Left cardiac atrium (tissue), 4 donors: ENCODE measurements at regions of chr4 and their contacts with region 1.

Region 1: GRCh38 chr4:176150356-176150682 is 45.1 kb downstream of the SPATA4 start:
- DNase-seq: no peak
- ATAC-seq: peak in 1 of 2 donors; percentile 49

Region 2: DNA sequence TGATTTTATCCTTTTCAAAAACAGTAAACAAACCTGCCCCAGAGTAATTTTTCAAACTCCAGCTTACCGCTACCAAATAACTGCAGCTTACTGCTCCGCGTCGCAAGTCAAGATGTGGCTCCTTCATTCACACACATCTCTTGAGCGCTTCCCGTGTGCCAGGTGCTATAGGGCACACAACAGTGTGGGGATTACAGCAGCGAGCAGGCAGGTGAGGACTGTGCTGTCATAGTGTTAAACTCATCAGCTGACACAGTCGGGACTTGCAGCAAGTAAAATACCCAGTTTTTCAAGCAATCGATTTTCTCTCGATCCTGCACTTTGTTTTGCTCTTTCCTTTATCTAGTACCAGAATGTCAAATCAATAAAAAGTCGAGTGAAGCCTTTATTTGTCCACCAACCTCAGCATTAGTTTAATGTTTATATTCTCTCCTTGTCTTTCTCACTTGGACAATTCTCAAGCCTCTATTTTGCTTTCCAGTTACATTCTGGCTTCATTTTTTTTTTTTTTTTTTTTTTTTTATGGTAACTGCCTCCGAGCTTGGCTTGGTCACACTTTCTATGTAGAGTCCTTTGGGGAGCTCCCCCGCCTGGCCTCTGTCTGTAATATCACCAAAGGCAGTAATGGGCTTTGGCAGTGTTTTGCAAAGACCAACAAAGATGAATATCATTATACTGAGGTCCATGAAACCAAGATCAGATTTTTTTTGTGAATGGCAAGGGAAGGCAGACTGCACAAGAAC is 127.0 kb after region 1 on chr4:
- intact Hi-C with region 1: loop called (anchors 5 to 10 kb)
- DNase-seq: peak; percentile 61
- ATAC-seq: peak; percentile 83 to 93

Region 3: DNA sequence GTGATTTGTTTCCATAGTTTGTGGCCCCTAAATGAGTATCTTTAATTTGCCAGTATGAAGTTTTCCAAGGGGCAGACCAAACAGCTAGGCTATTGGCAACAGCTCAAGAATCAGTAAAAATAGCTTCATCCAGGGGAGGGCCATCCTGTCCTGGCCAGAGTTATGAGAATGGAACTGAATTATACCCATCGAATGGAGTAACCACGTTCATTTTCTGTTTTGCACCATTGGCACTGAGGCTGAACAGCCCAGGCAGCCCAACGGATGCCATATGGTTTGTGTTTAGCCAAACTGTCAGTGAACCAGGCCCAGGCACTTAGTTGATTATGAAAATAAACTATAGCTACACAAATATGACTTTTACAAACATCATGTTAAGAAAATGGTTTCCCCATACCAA is 136.4 kb after region 1 on chr4:
- intact Hi-C with region 1: loop called in 1 of 2 experiments (anchors 10 kb)
- DNase-seq: no peak
- ATAC-seq: peak in 1 of 2 donors; percentile 46

Region 4: DNA sequence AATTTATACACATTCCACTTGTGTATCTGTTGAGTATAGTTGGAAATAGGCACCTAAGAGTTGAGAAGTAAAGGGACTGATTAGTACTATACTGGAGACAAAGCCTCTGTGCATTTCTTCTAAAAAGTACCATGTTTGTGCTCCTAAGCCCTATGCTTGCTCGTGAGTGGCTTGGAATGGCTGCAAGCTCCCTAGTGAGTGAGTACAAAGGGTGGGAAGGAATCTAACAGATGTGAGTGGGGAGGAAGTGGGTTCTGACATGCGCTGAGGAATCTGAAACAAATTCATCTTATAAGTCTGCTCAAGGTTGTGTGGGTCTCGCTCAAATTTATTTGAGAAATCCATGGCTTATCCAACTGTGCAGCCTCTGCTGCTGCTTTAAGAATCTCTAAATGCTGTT is 182.8 kb after region 1 on chr4:
- intact Hi-C with region 1: loop called in 1 of 2 experiments (anchors 5 kb)
- DNase-seq: no peak
- ATAC-seq: no peak

Region 5: DNA sequence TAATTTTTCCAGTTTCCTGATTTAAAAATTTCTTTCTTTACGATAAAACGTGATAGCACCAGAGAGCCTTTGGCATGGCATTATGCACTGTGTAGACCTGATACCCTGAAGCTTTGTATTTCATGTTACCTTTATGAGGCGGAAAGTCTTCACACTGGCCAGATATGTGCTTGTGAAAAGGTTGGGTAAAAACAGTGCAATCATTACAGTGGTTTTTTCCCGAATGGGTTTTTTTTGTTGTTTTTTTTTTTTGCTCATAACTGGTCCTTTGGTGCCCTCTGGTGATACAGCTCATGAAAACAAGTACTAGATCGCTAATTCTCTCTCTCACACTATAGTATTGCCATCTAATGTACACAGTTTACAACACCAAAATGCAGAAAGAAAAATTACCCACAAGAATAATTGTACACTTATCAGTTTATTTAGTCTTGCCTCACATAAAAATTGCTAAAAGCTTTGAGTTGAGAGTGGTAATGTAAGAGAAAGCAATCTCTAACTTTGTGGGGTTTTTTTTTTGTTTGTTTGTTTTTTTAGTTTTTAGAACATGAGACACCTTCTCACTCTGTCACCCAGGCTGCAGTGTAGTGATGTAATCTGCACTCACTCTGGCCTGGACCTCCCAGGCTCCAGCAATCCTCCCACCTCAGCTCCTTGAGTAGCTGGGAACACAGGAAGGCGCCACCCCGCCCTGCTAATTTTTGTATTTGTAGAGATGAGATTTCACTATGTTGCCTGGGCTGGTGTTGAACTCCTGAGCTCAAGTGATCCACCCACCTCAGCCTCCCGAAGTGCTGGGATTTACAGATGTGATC is 190.8 kb after region 1 on chr4:
- intact Hi-C with region 1: loop called in 1 of 2 experiments (anchors 2 kb)
- DNase-seq: no peak
- ATAC-seq: peak; percentile 53 to 68